Calu3 (cell line): ENCODE measurements at regions of chr1 and their contacts with region 1.

Region 1: GRCh38 chr1:200409761-200410565 is at the start of gene ZNF281:
- DNase-seq: peak; percentile 98
- H3K4me3 Mint-ChIP-seq: peak within 1 kb of the TSS; percentile 99
- H3K27ac Mint-ChIP-seq: peak within 1 kb of the TSS; percentile 95
- H3K4me1 Mint-ChIP-seq: peaks cover 67% of the 10 kb centered on the region
- H3K27me3 Mint-ChIP-seq: no peaks in the 10 kb centered on the region
- CTCF ChIP-seq: no peak
- total RNA-seq, gene ZNF281: 25.8 and 26.5 TPM in 2 replicates

Region 2: DNA sequence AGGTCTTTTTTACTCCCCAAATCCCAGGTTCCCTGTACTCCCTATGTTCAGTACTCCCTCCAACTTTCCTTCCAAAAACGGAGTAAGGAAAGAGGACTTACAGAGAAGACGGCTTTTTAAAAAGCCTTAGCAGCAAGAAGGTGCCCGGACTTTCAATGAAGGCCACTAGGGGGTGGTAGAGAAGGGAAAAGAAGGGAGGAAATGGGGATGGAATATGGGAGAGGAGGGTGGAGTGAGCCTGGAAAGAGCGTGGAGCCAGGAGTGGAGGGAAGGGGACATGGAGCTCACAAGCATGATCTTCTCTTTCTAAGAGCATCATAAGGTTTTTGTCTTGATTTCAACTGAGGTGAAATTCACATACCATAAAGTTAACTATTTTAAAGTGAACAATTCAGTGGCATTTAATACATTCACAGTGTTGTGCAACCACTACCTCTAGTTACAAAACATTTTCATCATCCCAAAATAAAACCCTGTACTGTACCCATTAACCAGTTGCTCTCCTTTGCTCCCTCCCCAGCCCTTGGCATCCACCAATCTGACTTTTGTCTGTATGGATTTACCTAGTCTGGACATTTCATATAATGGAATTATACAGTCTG is 130.1 kb before region 1 on chr1:
- CTCF ChIA-PET with region 1: no interaction called
- intact Hi-C with region 1: no loop called
- DNase-seq: peak; percentile 76
- H3K4me3 Mint-ChIP-seq: no peak overlapping the region
- H3K27ac Mint-ChIP-seq: no peak overlapping the region
- H3K4me1 Mint-ChIP-seq: peaks cover 14% of the 10 kb centered on the region
- H3K27me3 Mint-ChIP-seq: no peaks in the 10 kb centered on the region
- CTCF ChIP-seq: peak; percentile 84

Region 3: GRCh38 chr1:200379431-200379755 is 30.6 kb before region 1 on chr1:
- CTCF ChIA-PET with region 1: no interaction called
- intact Hi-C with region 1: loop called (anchors 5 kb)
- DNase-seq: no peak
- H3K4me3 Mint-ChIP-seq: peak overlapping the region; percentile 10
- H3K27ac Mint-ChIP-seq: no peak overlapping the region
- H3K4me1 Mint-ChIP-seq: peaks cover 48% of the 10 kb centered on the region
- H3K27me3 Mint-ChIP-seq: no peaks in the 10 kb centered on the region
- CTCF ChIP-seq: no peak